Activated CD4-positive, alpha-beta T cell treated with anti-CD3 and anti-CD28 coated beads for 36 hours (primary cell): ENCODE measurements at regions of chr16 and their contacts with region 1.

Region 1: DNA sequence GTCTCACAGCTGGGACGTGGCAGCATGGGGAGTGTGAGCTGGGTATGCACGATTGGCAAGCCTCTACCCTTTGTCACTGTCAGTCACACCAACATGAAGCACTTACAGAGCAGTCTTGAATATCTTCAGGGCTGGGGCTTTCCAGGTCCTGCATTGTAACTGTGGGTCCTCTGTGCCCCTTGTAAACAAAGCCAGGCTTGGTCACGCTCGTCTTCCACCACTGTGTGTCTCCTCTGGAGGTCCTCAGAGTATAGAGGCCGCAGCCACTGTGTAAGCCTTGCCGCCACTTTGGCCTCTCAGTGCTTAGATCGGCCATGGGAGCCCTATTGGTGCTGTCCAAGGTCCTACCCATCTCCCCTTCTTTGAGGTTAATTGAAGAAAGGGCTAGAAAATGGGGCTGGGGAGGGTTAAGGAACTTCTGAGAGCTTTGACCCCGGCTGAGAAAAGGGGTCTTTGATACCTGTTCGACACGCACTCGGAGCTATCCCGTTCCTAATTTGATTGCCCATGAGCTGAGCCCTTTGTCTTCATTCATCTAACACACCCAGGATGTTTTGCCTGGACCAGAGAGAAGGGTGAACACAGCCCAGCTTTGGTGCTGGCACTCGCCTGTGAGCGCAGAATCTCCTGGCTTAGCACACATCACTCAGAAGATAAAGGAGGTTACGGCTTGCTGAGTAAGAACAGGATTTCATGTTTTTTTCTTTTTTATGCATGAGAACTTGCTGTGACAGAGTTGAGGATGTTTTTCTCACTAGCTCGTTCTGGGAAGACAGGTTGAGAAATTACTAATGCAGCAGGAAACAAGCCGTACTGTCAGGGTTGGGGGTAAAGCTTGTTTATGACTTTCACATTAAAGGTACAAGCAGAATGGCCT is 267.9 kb downstream of the CPPED1 start:
- DNase-seq: peak; percentile 79
- ATAC-seq: peak; percentile 72
- H3K4me3 Mint-ChIP-seq: peak overlapping the region; percentile 54
- H3K27ac Mint-ChIP-seq: peak overlapping the region; percentile 95
- H3K4me1 Mint-ChIP-seq: peaks cover 97% of the 10 kb centered on the region
- H3K27me3 Mint-ChIP-seq: no peaks in the 10 kb centered on the region

Region 2: GRCh38 chr16:11094072-11094856 is 1441.5 kb before region 1 on chr16:
- CTCF ChIA-PET with region 1: no interaction called
- POLR2A ChIA-PET with region 1: no interaction called
- intact Hi-C with region 1: loop called in 1 of 2 experiments (anchors 10 kb)
- DNase-seq: peak; percentile 87
- ATAC-seq: peak; percentile 77
- H3K4me3 Mint-ChIP-seq: peak overlapping the region; percentile 53
- H3K27ac Mint-ChIP-seq: peak overlapping the region; percentile 99
- H3K4me1 Mint-ChIP-seq: peaks cover 86% of the 10 kb centered on the region
- H3K27me3 Mint-ChIP-seq: no peaks in the 10 kb centered on the region

Region 3: GRCh38 chr16:11915644-11916523 is 619.9 kb before region 1 on chr16 and contains the start of gene GSPT1:
- CTCF ChIA-PET with region 1: no interaction called
- POLR2A ChIA-PET with region 1: interaction called, 3 read pairs
- intact Hi-C with region 1: loop called in 1 of 2 experiments (anchors 10 kb)
- DNase-seq: peak; percentile 100
- ATAC-seq: peak; percentile 89
- H3K4me3 Mint-ChIP-seq: peak within 1 kb of the TSS; percentile 89
- H3K27ac Mint-ChIP-seq: peak within 1 kb of the TSS; percentile 96
- H3K4me1 Mint-ChIP-seq: peaks cover 32% of the 10 kb centered on the region
- H3K27me3 Mint-ChIP-seq: no peaks in the 10 kb centered on the region
- total RNA-seq, gene GSPT1: 234 to 260 TPM

Region 4: DNA sequence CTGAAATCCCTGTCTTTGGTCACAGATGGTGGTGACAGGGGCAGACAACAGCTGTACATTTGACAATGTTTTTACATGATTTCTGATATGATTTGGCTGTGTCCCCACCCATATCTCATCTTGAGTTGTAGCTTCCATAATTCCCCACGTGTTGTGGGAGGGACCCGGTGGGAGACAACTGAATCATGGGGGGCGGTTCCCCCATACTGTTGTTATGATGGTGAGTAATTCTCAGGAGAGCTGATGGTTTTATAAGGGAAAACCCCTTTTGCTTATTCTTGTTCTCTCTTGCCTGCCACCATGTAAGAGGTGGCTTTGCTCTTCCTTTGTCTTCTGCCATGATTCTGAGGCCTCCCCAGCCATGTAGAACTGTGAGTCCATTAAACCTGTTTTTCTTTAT is 86.0 kb before region 1 on chr16:
- CTCF ChIA-PET with region 1: interaction called, 5 read pairs
- POLR2A ChIA-PET with region 1: interaction called, 3 read pairs
- intact Hi-C with region 1: loop called in 1 of 2 experiments (anchors 1 kb)
- DNase-seq: peak; percentile 63
- ATAC-seq: peak; percentile 96
- H3K4me3 Mint-ChIP-seq: no peak overlapping the region
- H3K27ac Mint-ChIP-seq: peak overlapping the region; percentile 65
- H3K4me1 Mint-ChIP-seq: peaks cover 11% of the 10 kb centered on the region
- H3K27me3 Mint-ChIP-seq: no peaks in the 10 kb centered on the region

Region 5: DNA sequence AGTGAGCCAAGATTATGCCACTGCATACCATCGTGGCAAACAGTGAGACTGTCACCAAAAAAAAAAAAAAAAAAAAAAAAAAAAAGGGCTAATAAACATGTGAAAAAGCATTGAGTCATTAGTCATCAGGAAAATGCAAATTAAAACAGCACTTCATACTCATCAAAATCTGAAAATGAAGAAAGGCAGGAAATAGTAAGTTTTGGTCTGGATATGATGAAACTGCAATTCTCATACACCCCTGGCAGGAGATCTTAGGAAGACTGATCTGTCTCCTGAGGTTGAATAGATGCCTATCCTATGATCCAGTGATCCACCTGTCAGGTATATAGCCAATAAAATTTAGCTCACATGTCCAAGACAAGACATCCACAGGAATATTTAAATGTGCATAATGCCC is 55.2 kb after region 1 on chr16:
- CTCF ChIA-PET with region 1: interaction called, 5 read pairs
- POLR2A ChIA-PET with region 1: no interaction called
- intact Hi-C with region 1: loop called in 1 of 2 experiments (anchors 1 kb)
- DNase-seq: no peak
- ATAC-seq: peak; percentile 88
- H3K4me3 Mint-ChIP-seq: no peak overlapping the region
- H3K27ac Mint-ChIP-seq: peak overlapping the region; percentile 72
- H3K4me1 Mint-ChIP-seq: peaks cover 15% of the 10 kb centered on the region
- H3K27me3 Mint-ChIP-seq: peaks cover 18% of the 10 kb centered on the region

Region 6: GRCh38 chr16:12754824-12755543 is 219.2 kb after region 1 on chr16:
- CTCF ChIA-PET with region 1: interaction called, 6 read pairs
- POLR2A ChIA-PET with region 1: interaction called, 12 read pairs
- intact Hi-C with region 1: loop called (anchors 1 kb)
- DNase-seq: no peak
- ATAC-seq: no peak
- H3K4me3 Mint-ChIP-seq: no peak overlapping the region
- H3K27ac Mint-ChIP-seq: no peak overlapping the region
- H3K4me1 Mint-ChIP-seq: peaks cover 23% of the 10 kb centered on the region
- H3K27me3 Mint-ChIP-seq: no peaks in the 10 kb centered on the region

Region 7: GRCh38 chr16:12874186-12874585 is 338.4 kb after region 1 on chr16:
- CTCF ChIA-PET with region 1: no interaction called
- POLR2A ChIA-PET with region 1: no interaction called
- intact Hi-C with region 1: no loop called
- DNase-seq: no peak
- ATAC-seq: no peak
- H3K4me3 Mint-ChIP-seq: no peak overlapping the region
- H3K27ac Mint-ChIP-seq: no peak overlapping the region
- H3K4me1 Mint-ChIP-seq: no peaks in the 10 kb centered on the region
- H3K27me3 Mint-ChIP-seq: peaks cover 18% of the 10 kb centered on the region